Endothelial cell of umbilical vein (primary cell): ENCODE measurements at regions of chr2 and their contacts with region 1.

Region 1: DNA sequence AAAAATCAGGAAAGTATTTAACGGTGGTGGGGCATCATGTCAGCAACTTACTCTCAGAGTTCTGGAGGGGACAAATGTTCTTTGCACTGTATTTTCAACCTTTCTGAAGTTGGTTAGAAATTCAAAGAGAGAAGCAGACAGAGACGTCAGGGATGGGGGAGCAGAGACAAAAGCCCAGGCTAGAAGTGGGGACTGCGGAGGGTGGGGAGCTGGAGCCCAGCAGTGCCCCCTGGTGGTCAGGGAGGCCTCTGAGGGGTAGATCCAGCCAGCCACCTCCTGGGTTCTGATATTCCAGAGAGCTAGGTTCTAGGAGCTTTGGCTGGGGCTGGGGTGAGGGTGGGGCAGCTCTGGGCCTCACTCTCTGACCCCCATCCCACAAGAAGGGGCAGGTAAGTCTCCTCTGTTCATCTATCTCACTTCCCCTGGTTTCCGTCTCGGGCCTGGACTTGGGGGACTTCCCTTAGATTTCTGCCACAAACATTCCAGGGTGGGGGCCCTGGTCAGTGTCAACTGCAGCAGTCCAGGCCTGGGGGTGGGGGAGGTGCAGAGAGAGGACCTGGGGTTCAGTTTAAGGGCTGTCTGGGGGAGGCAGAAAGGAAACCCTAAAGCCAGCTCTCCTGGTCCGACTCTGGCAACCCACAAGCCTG is 8.9 kb downstream of the TNS1 start:
- DNase-seq: peak; percentile 54
- H3K4me3 ChIP-seq: peak overlapping the region in 1 of 3 experiments; percentile 59
- H3K27ac ChIP-seq: peak overlapping the region; percentile 74
- H3K4me1 ChIP-seq: peaks cover 33% of the 10 kb centered on the region
- H3K27me3 ChIP-seq: no peaks in the 10 kb centered on the region
- CTCF ChIP-seq: peak; percentile 80 to 96
- POLR2A ChIP-seq: no peak

Region 2: GRCh38 chr2:217434181-217434975 is 559.6 kb before region 1 on chr2:
- CTCF ChIA-PET with region 1: no interaction called
- POLR2A ChIA-PET with region 1: no interaction called
- dilution Hi-C with region 1: no loop called
- intact Hi-C with region 1: no loop called
- DNase-seq: peak; percentile 86
- H3K4me3 ChIP-seq: no peak overlapping the region
- H3K27ac ChIP-seq: no peak overlapping the region
- H3K4me1 ChIP-seq: no peaks in the 10 kb centered on the region
- H3K27me3 ChIP-seq: no peaks in the 10 kb centered on the region
- CTCF ChIP-seq: no peak
- POLR2A ChIP-seq: no peak

Region 3: GRCh38 chr2:217816396-217816869 is 177.5 kb before region 1 on chr2:
- CTCF ChIA-PET with region 1: interaction called, 5 read pairs
- POLR2A ChIA-PET with region 1: no interaction called
- dilution Hi-C with region 1: no loop called
- intact Hi-C with region 1: loop called (anchors 1 kb)
- DNase-seq: peak; percentile 96
- H3K4me3 ChIP-seq: no peak overlapping the region
- H3K27ac ChIP-seq: peak overlapping the region; percentile 88
- H3K4me1 ChIP-seq: peaks cover 36% of the 10 kb centered on the region
- H3K27me3 ChIP-seq: no peaks in the 10 kb centered on the region
- CTCF ChIP-seq: no peak
- POLR2A ChIP-seq: no peak

Region 4: GRCh38 chr2:217899231-217900009 is 94.5 kb before region 1 on chr2:
- CTCF ChIA-PET with region 1: interaction called, 14 read pairs
- POLR2A ChIA-PET with region 1: no interaction called
- dilution Hi-C with region 1: no loop called
- intact Hi-C with region 1: no loop called
- DNase-seq: no peak
- H3K4me3 ChIP-seq: no peak overlapping the region
- H3K27ac ChIP-seq: no peak overlapping the region
- H3K4me1 ChIP-seq: peaks cover 35% of the 10 kb centered on the region
- H3K27me3 ChIP-seq: no peaks in the 10 kb centered on the region
- CTCF ChIP-seq: peak; percentile 47 to 63
- POLR2A ChIP-seq: no peak

Region 5: DNA sequence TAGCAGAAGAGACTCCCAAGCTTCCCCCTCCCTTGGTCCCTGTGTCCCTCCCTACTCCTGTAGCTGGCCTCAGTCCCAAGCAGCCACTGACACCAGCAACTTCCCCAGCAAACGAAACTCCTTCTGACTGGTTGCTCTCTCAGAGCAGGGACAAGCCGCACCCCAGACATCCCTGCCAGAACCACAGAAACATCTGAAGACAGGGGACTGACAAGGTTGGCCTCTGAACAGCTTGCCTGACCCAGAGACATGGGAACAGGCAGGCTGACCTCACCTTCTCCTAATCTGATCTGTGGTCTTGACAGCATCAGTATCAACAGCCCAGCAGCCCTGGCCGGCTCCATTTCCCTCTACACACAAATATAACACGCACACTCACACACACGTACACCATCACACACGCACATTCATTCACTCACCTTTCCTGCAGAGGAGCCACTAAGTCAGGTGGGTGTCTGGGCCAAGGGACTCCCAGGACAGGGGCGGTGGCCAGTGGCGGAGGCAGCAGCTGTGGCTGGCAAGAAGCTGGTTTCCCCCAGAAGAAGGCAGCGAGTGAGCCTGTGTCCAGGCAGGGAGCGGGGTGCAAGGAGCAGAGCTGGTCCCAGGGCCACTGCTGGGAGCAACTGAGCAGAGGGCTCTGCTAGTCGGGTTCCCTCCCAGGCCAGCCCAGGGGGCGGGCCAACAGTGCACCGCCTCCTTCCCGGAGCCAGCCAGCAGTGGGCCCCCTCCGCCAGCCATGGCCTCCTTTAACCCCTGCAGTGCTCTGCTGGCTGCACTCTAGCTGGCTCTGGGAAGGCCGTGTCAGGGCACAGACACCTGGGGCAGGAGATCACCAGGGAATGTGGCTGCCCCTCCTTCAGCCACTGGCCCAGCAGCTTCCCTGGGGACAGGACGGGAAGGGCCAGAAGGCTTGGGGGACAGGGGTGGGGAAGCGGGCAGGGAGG is 50.2 kb before region 1 on chr2:
- CTCF ChIA-PET with region 1: interaction called, 15 read pairs
- POLR2A ChIA-PET with region 1: no interaction called
- dilution Hi-C with region 1: no loop called
- intact Hi-C with region 1: no loop called
- DNase-seq: peak; percentile 57
- H3K4me3 ChIP-seq: peak overlapping the region in 1 of 3 experiments; percentile 12
- H3K27ac ChIP-seq: no peak overlapping the region
- H3K4me1 ChIP-seq: peaks cover 5% of the 10 kb centered on the region
- H3K27me3 ChIP-seq: no peaks in the 10 kb centered on the region
- CTCF ChIP-seq: peak in 1 of 2 donors; percentile 25
- POLR2A ChIP-seq: no peak

Region 6: DNA sequence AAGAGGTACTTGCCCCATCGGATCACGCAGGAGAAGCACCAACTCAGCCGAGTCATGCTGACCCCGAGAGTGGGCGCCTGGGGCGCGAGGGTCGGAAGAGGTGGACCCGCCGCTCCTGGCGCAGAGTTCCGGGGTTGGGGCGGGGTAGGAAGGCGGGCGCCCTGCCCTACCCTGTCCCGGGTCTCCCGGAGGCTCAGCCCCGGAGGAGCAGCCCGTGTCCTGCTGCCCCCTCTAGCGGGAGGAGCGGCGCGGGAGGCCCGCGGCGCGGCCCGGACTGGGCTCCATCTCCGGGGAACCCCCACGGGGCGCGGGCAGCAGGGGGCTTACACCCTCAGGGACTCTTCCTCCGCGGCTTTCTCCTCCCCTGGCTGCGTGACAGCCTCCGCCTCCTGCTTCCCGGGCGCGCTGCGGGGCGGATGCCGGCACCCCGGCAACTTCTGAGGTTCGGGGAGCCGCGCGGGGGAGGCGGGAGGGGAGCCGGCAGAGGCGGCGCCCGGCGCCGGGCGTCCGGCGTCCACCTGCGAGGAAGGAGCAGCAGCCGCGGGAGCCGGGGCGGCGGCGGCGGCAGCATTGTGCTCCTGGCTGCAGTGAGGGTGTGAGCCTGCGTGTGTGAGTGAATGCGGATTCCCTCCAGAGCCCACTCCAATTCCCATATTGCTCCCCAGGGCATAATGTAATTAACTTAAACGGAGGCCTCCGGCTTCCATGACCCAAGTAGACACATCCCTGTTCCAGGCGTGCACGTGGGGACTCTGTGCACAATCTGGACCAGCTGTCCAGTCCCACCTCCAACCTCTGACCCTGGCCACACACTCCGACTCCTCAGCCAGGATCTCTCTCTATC is 16.4 kb after region 1 on chr2:
- CTCF ChIA-PET with region 1: interaction called, 46 read pairs
- POLR2A ChIA-PET with region 1: no interaction called
- dilution Hi-C with region 1: no loop called
- intact Hi-C with region 1: loop called (anchors 1 kb)
- DNase-seq: peak; percentile 26
- H3K4me3 ChIP-seq: peak overlapping the region; percentile 30 to 37 (median 36)
- H3K27ac ChIP-seq: no peak overlapping the region
- H3K4me1 ChIP-seq: peaks cover 21% of the 10 kb centered on the region
- H3K27me3 ChIP-seq: peaks cover 0 to 6% of the 10 kb centered on the region in 2 experiments
- CTCF ChIP-seq: peak; percentile 47 to 78
- POLR2A ChIP-seq: no peak

Region 7: GRCh38 chr2:218026676-218027425 is 32.9 kb after region 1 on chr2:
- CTCF ChIA-PET with region 1: interaction called, 35 read pairs
- POLR2A ChIA-PET with region 1: no interaction called
- dilution Hi-C with region 1: no loop called
- intact Hi-C with region 1: no loop called
- DNase-seq: no peak
- H3K4me3 ChIP-seq: no peak overlapping the region
- H3K27ac ChIP-seq: no peak overlapping the region
- H3K4me1 ChIP-seq: no peaks in the 10 kb centered on the region
- H3K27me3 ChIP-seq: peaks cover 0 to 10% of the 10 kb centered on the region in 2 experiments
- CTCF ChIP-seq: no peak
- POLR2A ChIP-seq: no peak

Region 8: GRCh38 chr2:218074031-218074430 is 80.1 kb after region 1 on chr2:
- CTCF ChIA-PET with region 1: interaction called, 8 read pairs
- POLR2A ChIA-PET with region 1: no interaction called
- dilution Hi-C with region 1: no loop called
- intact Hi-C with region 1: loop called (anchors 2 kb)
- DNase-seq: peak; percentile 17
- H3K4me3 ChIP-seq: no peak overlapping the region
- H3K27ac ChIP-seq: no peak overlapping the region
- H3K4me1 ChIP-seq: no peaks in the 10 kb centered on the region
- H3K27me3 ChIP-seq: no peaks in the 10 kb centered on the region
- CTCF ChIP-seq: peak; percentile 42 to 71
- POLR2A ChIP-seq: no peak